Breast epithelium (tissue), 4 donors: ENCODE measurements at regions of chr1 and their contacts with region 1.

Region 1: GRCh38 chr1:110734133-110734680 is 59.5 kb upstream of the KCNA3 start:
- DNase-seq: no peak
- H3K4me3 ChIP-seq: no peak overlapping the region
- H3K27ac ChIP-seq: no peak overlapping the region
- H3K4me1 ChIP-seq: no peaks in the 10 kb centered on the region
- H3K27me3 ChIP-seq: peaks cover 0 to 3% of the 10 kb centered on the region in 2 donors
- CTCF ChIP-seq: no peak
- POLR2A ChIP-seq: no peak

Region 2: DNA sequence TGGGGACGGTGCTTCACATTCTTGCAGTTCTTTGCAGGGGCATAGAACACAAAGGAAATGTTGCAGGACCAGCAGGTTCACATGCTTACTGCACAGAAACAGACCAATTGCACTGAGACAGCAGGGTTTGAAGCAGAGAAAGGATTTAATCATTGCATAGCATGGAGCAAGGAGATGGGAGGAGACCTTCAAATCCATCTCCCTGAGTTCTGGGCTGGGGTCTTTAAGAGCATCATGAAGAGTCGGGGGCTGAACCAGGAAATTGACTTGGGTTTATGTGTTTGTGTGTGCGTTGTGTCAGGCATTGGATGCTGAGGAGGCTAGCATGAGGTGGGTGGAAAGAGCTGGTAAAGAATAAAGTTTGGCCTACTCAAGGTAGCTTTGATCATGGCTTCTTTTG is 1281.1 kb after region 1 on chr1:
- intact Hi-C with region 1: loop called (anchors 5 kb)
- DNase-seq: no peak
- H3K4me3 ChIP-seq: no peak overlapping the region
- H3K27ac ChIP-seq: no peak overlapping the region
- H3K4me1 ChIP-seq: no peaks in the 10 kb centered on the region
- H3K27me3 ChIP-seq: no peaks in the 10 kb centered on the region
- CTCF ChIP-seq: no peak
- POLR2A ChIP-seq: no peak